ENCODE measurements at regions of chr17 and their contacts with region 1.

Region 1: DNA sequence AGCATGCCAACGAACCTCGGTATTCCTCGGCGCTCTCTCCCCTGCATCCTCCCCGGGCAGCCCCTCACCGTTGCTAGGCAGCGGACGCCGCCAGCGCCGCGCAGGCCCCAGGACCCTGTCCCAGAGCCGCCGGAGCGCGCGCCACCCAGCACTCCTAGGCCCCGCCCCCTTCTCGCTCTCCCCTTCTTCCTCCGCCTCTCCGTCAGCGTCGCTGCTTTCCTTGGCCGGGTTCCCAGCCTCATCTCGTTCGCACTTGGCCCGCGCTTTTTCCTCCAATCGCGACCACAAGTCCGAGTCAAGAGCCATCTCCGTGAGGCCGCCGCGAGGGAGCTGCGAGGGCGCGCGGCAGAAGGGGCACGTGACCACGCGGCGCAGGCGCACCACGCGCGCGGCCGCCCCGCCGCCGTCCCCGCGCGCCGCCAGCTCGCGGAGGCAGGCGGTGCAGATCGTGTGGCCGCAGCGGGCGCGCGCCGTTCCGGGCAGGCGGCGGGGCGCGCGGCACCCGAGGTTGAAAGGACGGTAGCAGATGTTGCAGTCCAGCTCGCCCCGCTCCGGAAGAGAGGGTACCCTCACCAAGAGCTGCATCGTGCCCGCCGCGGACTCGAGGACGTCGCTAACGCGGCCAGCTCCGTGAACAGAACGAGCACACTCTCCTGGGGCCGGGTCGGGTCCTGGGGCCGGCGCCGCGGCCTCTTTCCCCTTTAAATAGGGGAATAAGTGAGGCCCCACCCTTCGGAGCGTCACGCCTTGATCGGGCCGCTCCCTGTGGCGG is at the start of gene RNF227:
- DNase-seq: peak; percentile 83

Region 2: DNA sequence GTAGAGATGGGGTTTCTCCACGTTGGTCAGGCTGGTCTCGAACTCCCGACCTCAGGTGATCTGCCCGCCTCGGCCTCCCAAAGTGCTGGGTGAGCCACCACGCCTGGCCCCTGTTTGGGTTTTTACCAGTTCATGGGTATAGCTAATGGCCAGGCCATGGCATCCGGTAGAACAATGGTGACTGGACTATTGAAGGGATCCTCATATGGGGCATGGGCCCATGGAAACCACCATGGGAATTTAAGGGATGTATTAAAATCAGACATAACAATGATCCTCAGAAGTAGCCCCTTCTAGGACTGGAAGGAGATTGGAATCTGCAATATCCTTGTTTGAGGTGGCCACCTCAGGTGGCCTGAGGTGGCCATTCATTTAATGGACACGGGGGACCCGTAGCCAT is 69.1 kb after region 1 on chr17:
- CTCF ChIA-PET with region 1: interaction called, 14 read pairs
- POLR2A ChIA-PET with region 1: interaction called, 12 read pairs
- DNase-seq: no peak

Region 3: DNA sequence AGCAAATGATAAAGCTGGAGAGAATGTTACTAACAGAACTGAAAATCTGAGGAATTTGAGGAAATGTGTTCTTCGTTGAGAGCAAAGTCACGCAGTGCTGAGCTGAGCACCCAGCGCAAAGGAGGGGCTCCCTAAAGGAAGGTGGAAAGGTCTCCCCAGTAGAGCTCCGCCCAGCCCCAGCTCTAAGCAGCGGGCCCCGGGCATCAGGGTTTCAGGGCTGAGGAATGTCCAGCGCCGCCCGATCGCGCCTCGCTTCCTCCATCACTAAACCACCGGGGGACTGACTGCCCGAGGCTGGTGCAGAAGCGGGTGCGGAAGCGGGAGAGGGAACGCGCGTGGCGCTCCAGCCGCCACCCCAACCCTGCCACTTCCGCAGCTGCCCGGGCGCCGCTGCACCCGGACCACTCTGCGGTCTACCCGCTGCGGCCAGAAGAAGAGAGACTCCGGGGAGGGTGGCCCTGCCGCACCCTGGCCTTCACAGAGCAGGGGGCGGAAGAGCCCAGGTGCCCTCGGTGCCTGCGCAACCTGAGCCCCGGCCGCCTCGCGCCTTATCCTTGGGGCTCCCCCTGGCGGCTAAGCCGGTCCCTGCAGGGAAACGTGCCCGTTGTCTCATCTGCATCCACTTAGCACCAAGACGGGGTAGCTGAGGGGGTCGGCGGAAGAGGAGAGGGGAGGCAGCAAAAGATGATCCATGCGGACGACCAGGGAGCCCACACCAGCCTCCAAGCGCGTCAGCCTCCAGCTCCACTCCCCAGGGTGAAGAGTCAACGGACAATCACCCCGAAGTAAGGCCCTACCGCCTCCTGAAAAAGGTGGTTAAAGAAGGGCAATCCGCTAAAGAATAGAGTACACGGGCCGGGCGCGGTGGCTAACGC is 74.2 kb after region 1 on chr17:
- CTCF ChIA-PET with region 1: interaction called, 14 read pairs
- POLR2A ChIA-PET with region 1: interaction called, 12 read pairs
- DNase-seq: peak; percentile 89

Measured in HEK293T (cell line).